Activated CD4-positive, alpha-beta T cell treated with anti-CD3 and anti-CD28 coated beads, Interleukin-2, amount 10 ng/mL, durations not matched to agents 24 days and 14 days (primary cell): ENCODE measurements at regions of chr1 and their contacts with region 1.

Region 1: GRCh38 chr1:114511032-114511785 is at the start of gene TRIM33:
- DNase-seq: peak; percentile 98
- H3K4me3 Mint-ChIP-seq: peak within 1 kb of the TSS; percentile 96
- H3K27ac Mint-ChIP-seq: peak within 1 kb of the TSS; percentile 98
- H3K4me1 Mint-ChIP-seq: peaks cover 41% of the 10 kb centered on the region
- H3K27me3 Mint-ChIP-seq: peaks cover 2% of the 10 kb centered on the region
- total RNA-seq, gene TRIM33: 37.7 and 39.7 TPM in 2 replicates

Region 2: GRCh38 chr1:113904674-113905434 is 606.4 kb before region 1 on chr1 and contains the starts of genes AP4B1 and DCLRE1B:
- intact Hi-C with region 1: loop called (anchors 1 kb)
- DNase-seq: peak; percentile 99
- H3K4me3 Mint-ChIP-seq: peak within 1 kb of the TSS; percentile 99
- H3K27ac Mint-ChIP-seq: peak within 1 kb of the TSS; percentile 98
- H3K4me1 Mint-ChIP-seq: peaks cover 53% of the 10 kb centered on the region
- H3K27me3 Mint-ChIP-seq: no peaks in the 10 kb centered on the region
- total RNA-seq, gene AP4B1: 41.7 and 42.3 TPM in 2 replicates
- total RNA-seq, gene DCLRE1B: 21.5 and 22.5 TPM in 2 replicates

Region 3: DNA sequence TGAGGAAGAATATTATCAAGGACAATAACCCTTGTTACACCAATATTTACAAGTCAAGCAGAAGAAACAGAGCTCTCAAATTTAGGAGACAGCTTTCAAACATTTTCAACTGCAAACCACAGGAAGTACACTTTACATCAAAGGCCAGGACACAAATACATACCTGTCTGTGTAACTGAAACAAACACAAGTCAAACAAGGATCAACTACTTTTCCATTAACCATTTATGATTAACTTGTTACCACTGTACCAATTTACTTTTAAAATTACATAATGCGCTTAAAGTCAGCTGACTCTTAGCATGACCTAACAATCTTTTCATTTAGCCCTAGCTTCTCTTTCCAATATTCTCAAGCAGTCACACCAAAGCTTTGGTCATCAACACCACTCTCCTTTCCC is 43.7 kb before region 1 on chr1:
- intact Hi-C with region 1: loop called (anchors 5 kb)
- DNase-seq: no peak
- H3K4me3 Mint-ChIP-seq: peak overlapping the region; percentile 52
- H3K27ac Mint-ChIP-seq: peak overlapping the region; percentile 54
- H3K4me1 Mint-ChIP-seq: peaks cover 42% of the 10 kb centered on the region
- H3K27me3 Mint-ChIP-seq: no peaks in the 10 kb centered on the region

Region 4: GRCh38 chr1:114670083-114671010 is 159.1 kb after region 1 on chr1:
- intact Hi-C with region 1: loop called (anchors 5 kb)
- DNase-seq: peak; percentile 94
- H3K4me3 Mint-ChIP-seq: peak overlapping the region; percentile 94
- H3K27ac Mint-ChIP-seq: peak overlapping the region; percentile 25
- H3K4me1 Mint-ChIP-seq: peaks cover 10% of the 10 kb centered on the region
- H3K27me3 Mint-ChIP-seq: peaks cover 52% of the 10 kb centered on the region

Region 5: DNA sequence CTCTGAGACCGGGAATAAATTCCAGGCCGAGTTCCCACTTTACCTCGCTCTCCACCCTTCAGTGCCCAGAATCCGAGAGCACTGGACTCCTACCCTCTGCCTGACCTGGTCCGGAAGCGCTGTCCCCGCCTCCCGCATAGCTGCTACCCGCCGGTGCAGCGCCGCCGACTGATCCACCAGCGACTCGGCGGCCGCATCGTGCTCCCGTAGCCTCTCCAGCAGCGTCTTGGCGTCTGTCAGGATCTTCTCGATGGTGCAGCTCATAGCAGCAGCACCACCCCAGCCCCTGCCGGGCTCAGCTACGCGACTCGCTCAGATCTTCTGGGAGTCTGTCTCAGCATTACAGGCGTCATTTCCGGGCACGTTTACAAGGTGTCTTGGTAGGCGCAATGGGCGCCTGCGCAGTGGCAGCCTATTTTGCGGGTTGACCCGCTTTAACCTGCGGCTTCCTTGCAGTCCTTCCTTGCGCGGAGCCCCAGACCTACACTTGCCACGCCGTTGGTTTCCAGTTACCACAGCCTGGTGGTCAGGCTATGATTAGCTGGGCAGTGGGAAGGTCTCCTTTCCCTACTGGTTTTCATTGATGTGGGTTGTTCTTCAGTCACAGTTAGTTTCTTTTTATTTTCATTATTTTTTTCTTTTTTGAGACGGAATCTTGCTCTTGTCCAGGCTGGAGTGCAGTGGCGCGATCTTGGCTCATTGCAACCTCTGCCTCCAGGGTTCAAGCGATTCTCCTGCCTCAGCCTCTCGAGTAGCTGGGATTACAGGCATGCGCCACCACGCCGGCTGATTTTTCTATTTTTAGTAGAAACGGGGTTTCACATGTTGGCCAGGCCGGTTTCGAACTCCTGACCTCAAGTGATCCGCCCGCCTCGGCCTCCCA is 269.4 kb after region 1 on chr1 and contains the start of gene SIKE1:
- intact Hi-C with region 1: loop called (anchors 1 kb)
- DNase-seq: peak; percentile 98
- H3K4me3 Mint-ChIP-seq: peak within 1 kb of the TSS; percentile 100
- H3K27ac Mint-ChIP-seq: peak within 1 kb of the TSS; percentile 99
- H3K4me1 Mint-ChIP-seq: peaks cover 18% of the 10 kb centered on the region
- H3K27me3 Mint-ChIP-seq: peaks cover 8% of the 10 kb centered on the region
- total RNA-seq, gene SIKE1: 64.4 and 65.8 TPM in 2 replicates